ENCODE measurements at regions of chr6 and their contacts with region 1.

Region 1: GRCh38 chr6:110949679-110950285 is 8.7 kb upstream of the GTF3C6 start:
- DNase-seq: peak; percentile 5 to 56
- H3K4me3 ChIP-seq: no peak overlapping the region
- H3K27ac ChIP-seq: no peak overlapping the region
- H3K4me1 ChIP-seq: peaks cover 30% of the 10 kb centered on the region
- H3K27me3 ChIP-seq: no peaks in the 10 kb centered on the region
- CTCF ChIP-seq: peak; percentile 84

Region 2: DNA sequence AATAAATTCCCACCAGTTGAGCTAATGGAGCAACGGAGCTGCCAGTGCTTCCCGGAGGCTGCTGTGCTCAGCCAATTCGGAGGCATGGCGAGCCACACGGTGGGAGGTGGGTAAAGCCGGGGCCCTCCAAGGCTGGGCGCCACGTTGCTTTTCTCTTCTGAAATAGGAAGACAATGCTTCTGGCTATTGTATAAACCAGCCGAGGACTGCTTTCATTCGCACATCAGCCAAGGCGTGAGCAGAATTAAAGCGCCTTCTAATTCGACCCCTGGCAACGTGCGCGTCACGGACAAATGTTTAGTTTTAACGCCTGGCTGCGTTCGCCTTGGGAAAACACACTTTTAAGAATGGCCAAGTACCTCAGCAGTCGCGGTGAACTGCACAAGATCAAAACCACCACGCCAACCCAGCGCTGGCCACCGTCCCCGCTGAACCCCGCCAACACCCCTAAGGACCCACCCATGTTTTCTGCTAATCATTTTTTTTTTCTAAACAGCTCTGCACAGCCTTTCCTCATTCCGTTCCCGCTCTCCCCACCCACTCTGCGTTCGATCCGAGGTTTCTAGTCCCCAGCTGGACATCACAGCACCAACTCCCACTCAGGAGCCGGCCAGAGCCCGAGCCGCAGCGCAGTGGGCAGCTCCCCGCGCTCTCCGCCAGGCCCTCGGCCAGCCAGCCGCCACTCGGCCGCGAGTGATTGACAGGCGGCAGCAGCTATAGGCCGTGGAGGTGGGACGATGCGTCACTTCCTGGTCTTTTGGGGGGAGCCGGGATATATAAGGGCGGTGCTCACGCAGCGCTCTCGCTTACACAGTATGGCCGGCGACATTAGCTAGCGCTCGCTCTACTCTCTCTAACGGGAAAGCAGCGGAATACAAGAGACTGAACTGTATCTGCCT is 75.6 kb before region 1 on chr6 and contains the start of gene AMD1:
- CTCF ChIA-PET with region 1: no interaction called
- POLR2A ChIA-PET with region 1: interaction called, 29 read pairs
- intact Hi-C with region 1: loop called (anchors 2 kb)
- DNase-seq: peak; percentile 93 to 95
- H3K4me3 ChIP-seq: peak within 1 kb of the TSS; percentile 90
- H3K27ac ChIP-seq: peak within 1 kb of the TSS; percentile 73
- H3K4me1 ChIP-seq: peaks cover 36% of the 10 kb centered on the region
- H3K27me3 ChIP-seq: no peaks in the 10 kb centered on the region
- CTCF ChIP-seq: no peak
- total RNA-seq, gene AMD1: 40.1 and 46.4 TPM in 2 replicates